CD8-positive, alpha-beta T cell (primary cell): ENCODE measurements at regions of chr6 and their contacts with region 1.

Region 1: DNA sequence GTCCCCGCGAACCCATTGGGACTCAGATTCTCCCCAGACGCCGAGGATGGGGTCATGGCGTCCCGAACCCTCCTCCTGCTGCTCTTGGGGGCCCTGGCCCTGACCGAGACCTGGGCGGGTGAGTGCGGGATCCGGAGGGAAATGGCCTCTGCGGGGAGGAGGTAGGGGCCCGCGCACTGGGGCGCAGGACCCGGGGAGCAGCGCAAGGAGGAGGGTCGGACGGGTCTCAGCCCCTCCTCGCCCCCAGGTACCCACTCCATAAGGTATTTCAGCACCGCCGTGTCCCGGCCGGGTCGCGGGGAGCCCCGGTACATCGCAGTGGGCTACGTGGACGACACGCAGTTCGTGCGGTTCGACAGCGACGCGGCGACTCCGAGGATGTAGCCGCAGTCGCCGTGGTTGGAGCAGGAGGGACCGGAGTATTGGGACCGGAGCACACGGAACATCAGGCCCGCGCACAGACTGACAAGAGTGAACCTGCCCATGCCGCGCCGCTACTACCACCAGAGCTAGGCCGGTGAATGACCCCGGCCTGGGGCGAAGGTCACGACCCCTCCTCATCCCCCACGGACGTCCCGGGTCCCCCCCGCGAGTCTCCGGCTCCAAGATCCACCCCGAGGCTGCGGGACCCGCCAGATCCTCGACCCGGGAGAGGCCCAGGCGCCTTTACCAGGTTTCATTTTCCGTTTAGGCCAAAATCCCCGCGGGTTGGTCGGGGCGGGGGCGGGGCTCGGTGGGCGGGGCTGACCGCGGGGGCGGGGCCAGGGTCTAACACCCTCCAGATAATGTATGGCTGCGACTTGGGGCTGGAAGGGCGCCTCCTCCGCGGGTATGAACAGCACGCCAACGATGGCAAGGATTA is 15.7 kb upstream of the HLA-A start:
- DNase-seq: peak; percentile 65 to 93 (median 83)
- ATAC-seq: peak; percentile 93
- H3K4me3 ChIP-seq: peak overlapping the region; percentile 88 to 93
- H3K4me3 Mint-ChIP-seq: peak overlapping the region; percentile 83
- H3K27ac ChIP-seq: peak overlapping the region; percentile 92 to 99
- H3K27ac Mint-ChIP-seq: peak overlapping the region; percentile 94
- H3K4me1 ChIP-seq: peaks cover 8% of the 10 kb centered on the region
- H3K4me1 Mint-ChIP-seq: peaks cover 32% of the 10 kb centered on the region
- H3K27me3 ChIP-seq: no peaks in the 10 kb centered on the region
- H3K27me3 Mint-ChIP-seq: no peaks in the 10 kb centered on the region
- CTCF ChIP-seq: no peak

Region 2: GRCh38 chr6:29723262-29723665 is 203.4 kb before region 1 on chr6 and contains the start of gene HLA-F:
- CTCF ChIA-PET with region 1: no interaction called
- POLR2A ChIA-PET with region 1: no interaction called
- intact Hi-C with region 1: loop called in 1 of 2 experiments (anchors 5 kb)
- DNase-seq: peak; percentile 69 to 98 (median 85)
- ATAC-seq: peak; percentile 77
- H3K4me3 ChIP-seq: peak within 1 kb of the TSS; percentile 98
- H3K4me3 Mint-ChIP-seq: peak within 1 kb of the TSS; percentile 93
- H3K27ac ChIP-seq: peak within 1 kb of the TSS; percentile 88 to 100
- H3K27ac Mint-ChIP-seq: peak within 1 kb of the TSS; percentile 97
- H3K4me1 ChIP-seq: peaks cover 48% of the 10 kb centered on the region
- H3K4me1 Mint-ChIP-seq: peaks cover 56% of the 10 kb centered on the region
- H3K27me3 ChIP-seq: no peaks in the 10 kb centered on the region
- H3K27me3 Mint-ChIP-seq: no peaks in the 10 kb centered on the region
- CTCF ChIP-seq: no peak
- total RNA-seq, gene HLA-F: 378 to 382 TPM

Region 3: GRCh38 chr6:29847871-29848630 is 78.6 kb before region 1 on chr6:
- CTCF ChIA-PET with region 1: no interaction called
- POLR2A ChIA-PET with region 1: no interaction called
- intact Hi-C with region 1: loop called in 1 of 2 experiments (anchors 2 kb)
- DNase-seq: peak; percentile 74 to 94 (median 85)
- ATAC-seq: peak; percentile 86
- H3K4me3 ChIP-seq: no peak overlapping the region
- H3K4me3 Mint-ChIP-seq: no peak overlapping the region
- H3K27ac ChIP-seq: no peak overlapping the region
- H3K27ac Mint-ChIP-seq: no peak overlapping the region
- H3K4me1 ChIP-seq: peaks cover 3% of the 10 kb centered on the region
- H3K4me1 Mint-ChIP-seq: peaks cover 8% of the 10 kb centered on the region
- H3K27me3 ChIP-seq: peaks cover 11 to 23% of the 10 kb centered on the region in 2 experiments
- H3K27me3 Mint-ChIP-seq: peaks cover 58% of the 10 kb centered on the region
- CTCF ChIP-seq: peak; percentile 97

Region 4: GRCh38 chr6:29887819-29888776 is 38.5 kb before region 1 on chr6:
- CTCF ChIA-PET with region 1: no interaction called
- POLR2A ChIA-PET with region 1: no interaction called
- intact Hi-C with region 1: loop called (anchors 5 kb)
- DNase-seq: peak; percentile 79 to 94 (median 85)
- ATAC-seq: peak; percentile 86
- H3K4me3 ChIP-seq: peak overlapping the region; percentile 72 to 83
- H3K4me3 Mint-ChIP-seq: peak overlapping the region; percentile 85
- H3K27ac ChIP-seq: peak overlapping the region; percentile 91 to 97
- H3K27ac Mint-ChIP-seq: peak overlapping the region; percentile 88
- H3K4me1 ChIP-seq: peaks cover 10% of the 10 kb centered on the region
- H3K4me1 Mint-ChIP-seq: peaks cover 8% of the 10 kb centered on the region
- H3K27me3 ChIP-seq: no peaks in the 10 kb centered on the region
- H3K27me3 Mint-ChIP-seq: no peaks in the 10 kb centered on the region
- CTCF ChIP-seq: no peak

Region 5: DNA sequence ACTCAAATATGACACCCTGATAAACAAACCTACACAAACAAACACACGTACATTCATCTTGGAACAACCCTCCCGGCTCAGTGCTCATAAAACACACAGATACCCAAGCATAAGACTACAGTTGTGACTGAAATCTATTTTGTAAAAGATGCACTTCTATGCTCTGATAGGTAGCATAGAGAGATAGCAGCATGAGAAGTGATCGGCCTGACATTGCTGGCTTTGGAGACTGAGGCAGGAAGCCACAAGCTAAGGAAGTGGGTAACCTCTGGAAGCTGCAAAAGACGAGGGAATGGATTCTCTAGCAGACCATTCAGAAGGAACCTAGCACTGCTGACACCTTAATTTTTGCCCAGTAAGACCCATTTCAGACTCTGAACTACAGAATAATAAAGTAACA is 150.6 kb after region 1 on chr6:
- CTCF ChIA-PET with region 1: no interaction called
- POLR2A ChIA-PET with region 1: no interaction called
- intact Hi-C with region 1: no loop called
- DNase-seq: no peak
- ATAC-seq: no peak
- H3K4me3 ChIP-seq: no peak overlapping the region
- H3K4me3 Mint-ChIP-seq: no peak overlapping the region
- H3K27ac ChIP-seq: no peak overlapping the region
- H3K27ac Mint-ChIP-seq: no peak overlapping the region
- H3K4me1 ChIP-seq: peaks cover 29% of the 10 kb centered on the region
- H3K4me1 Mint-ChIP-seq: peaks cover 29% of the 10 kb centered on the region
- H3K27me3 ChIP-seq: peaks cover 26 to 29% of the 10 kb centered on the region in 2 experiments
- H3K27me3 Mint-ChIP-seq: peaks cover 43% of the 10 kb centered on the region
- CTCF ChIP-seq: no peak